Heart left ventricle (tissue), 16 donors: ENCODE measurements at regions of chr15 and their contacts with region 1.

Region 1: DNA sequence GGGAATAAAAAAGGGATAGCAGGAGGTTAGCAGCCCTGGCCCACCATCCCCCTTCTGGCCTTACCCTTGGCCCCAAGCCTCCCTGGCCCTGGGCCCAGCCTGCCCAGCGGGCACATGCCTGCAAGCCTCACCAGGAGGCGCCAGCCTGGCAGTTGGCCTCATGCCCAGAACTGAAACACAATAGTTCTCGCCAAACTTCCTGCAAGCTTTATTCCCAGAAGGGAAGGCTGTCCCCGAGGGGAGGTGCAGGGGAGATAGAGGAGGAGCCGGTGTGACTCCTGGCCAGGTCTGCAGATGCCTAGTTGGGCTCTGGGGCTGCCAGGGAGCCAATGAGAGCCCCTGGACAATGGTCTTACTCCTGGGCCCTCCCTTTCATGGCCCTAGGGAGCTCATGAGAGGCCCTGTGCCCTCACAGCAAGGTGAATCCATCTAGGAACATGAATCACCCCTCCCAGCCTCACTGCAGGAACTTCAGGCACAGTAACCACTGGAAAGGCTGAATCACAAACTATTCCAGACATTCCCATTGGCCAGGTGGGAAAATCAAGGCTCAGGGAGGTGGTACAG is 4.0 kb downstream of the CCDC33 start:
- DNase-seq: peak; percentile 86 to 95 (median 91)
- ATAC-seq: peak; percentile 81 to 91 (median 86)
- H3K4me3 ChIP-seq: no peak overlapping the region
- H3K27ac ChIP-seq: peak overlapping the region in 11 of 12 donors; percentile 24 to 76 (median 42)
- H3K4me1 ChIP-seq: peaks cover 0 to 41% (median 28%) of the 10 kb centered on the region in 12 donors
- H3K27me3 ChIP-seq: peaks cover 0 to 2% (median 0%) of the 10 kb centered on the region in 9 donors
- CTCF ChIP-seq: peak; percentile 32 to 69 (median 52)
- POLR2A ChIP-seq: no peak

Region 2: DNA sequence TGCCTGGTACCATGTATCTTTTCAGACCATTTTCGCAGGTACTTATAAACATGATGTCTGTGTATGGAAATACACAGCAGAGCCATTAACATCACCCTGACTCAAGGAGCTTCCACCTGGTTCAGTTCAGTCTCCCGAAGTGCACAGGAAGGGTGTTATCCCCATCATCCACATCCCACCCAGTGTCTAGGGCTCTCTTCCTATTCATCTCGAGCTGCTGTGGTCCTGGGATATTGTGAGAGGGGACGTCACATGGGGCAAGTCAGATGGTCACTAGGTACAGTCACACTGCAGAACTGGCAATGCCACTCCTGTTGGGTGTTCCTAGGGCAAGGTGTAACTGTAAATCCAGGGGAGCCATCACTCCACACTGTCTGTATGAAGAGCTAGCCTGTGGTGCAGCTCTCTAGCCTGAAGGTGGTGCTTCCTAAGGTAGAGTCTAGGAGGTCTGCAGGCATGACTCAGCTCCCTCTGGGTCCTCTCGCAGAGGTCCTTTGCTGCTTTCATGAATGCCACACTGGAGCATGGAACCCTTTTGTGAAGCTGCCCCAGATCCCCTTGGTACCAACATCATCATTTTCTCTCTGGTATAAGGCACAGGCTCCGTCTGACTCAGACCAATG is 95.8 kb before region 1 on chr15:
- intact Hi-C with region 1: loop called in 2 of 10 experiments (anchors 5 kb)
- DNase-seq: no peak
- ATAC-seq: no peak
- H3K4me3 ChIP-seq: no peak overlapping the region
- H3K27ac ChIP-seq: no peak overlapping the region
- H3K4me1 ChIP-seq: no peaks in the 10 kb centered on the region
- H3K27me3 ChIP-seq: peaks cover 0 to 11% (median 0%) of the 10 kb centered on the region in 9 donors
- CTCF ChIP-seq: no peak
- POLR2A ChIP-seq: no peak

Region 3: DNA sequence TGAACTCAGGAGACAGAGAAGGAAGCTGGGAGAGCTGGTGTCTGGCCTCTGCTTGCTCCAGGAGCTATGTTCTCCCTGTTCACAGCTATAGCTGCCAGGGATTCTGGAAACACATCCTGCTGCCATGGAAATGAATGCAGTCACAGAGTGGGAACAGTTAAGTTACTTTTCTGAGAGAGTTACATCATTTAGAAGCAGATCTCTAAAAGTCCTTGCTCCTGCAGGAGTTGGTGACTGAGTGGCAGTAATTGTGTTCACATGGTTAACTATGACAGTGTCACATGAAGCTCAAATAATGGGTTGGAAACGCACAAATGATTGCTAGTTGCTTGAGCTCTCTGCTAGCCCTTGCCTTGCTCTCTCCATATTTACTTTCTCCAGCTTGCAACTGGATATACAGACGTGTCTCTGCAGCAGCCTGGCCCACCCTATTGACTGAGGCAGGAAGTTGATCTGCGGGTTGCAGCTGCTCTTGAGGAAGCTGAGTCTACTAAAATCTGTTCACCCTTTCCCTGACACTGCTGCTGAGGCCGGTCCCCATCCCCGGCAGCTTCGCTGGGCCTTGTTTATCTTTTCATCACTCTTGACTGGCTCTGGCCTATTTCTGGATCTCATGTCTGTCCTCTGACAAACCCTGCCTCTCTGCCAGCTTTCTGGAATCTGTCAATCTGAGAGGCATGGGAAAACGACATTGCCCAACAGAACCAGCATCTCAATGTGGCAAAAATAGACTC is 83.2 kb before region 1 on chr15:
- intact Hi-C with region 1: loop called in 1 of 10 experiments (anchors 5 kb)
- DNase-seq: peak in 2 of 5 donors; percentile 62 to 69
- ATAC-seq: peak; percentile 87 to 94 (median 90)
- H3K4me3 ChIP-seq: no peak overlapping the region
- H3K27ac ChIP-seq: peak overlapping the region in 11 of 12 donors; percentile 7 to 72 (median 46)
- H3K4me1 ChIP-seq: peaks cover 3 to 47% (median 31%) of the 10 kb centered on the region in 12 donors
- H3K27me3 ChIP-seq: peaks cover 0 to 4% (median 0%) of the 10 kb centered on the region in 9 donors
- CTCF ChIP-seq: no peak
- POLR2A ChIP-seq: no peak

Region 4: GRCh38 chr15:74291101-74292071 is 51.3 kb after region 1 on chr15:
- intact Hi-C with region 1: loop called in 1 of 10 experiments (anchors 10 kb)
- DNase-seq: peak; percentile 84 to 89 (median 87)
- ATAC-seq: peak; percentile 72 to 92 (median 82)
- H3K4me3 ChIP-seq: no peak overlapping the region
- H3K27ac ChIP-seq: no peak overlapping the region
- H3K4me1 ChIP-seq: peaks cover 0 to 11% (median 5%) of the 10 kb centered on the region in 12 donors
- H3K27me3 ChIP-seq: peaks cover 0 to 14% (median 0%) of the 10 kb centered on the region in 9 donors
- CTCF ChIP-seq: no peak
- POLR2A ChIP-seq: no peak